HEK293 (cell line): ENCODE measurements at regions of chr6 and their contacts with region 1.

Region 1: GRCh38 chr6:134438837-134439236 is 120.9 kb upstream of the SGK1 start:
- H3K4me3 ChIP-seq: no peak overlapping the region
- H3K27ac ChIP-seq: no peak overlapping the region
- H3K4me1 ChIP-seq: peaks cover 3% of the 10 kb centered on the region; the same call in 1 of the 2 replicates
- CTCF ChIP-seq: no peak

Region 2: GRCh38 chr6:134502614-134503549 is 64.0 kb after region 1 on chr6:
- CTCF ChIA-PET with region 1: no interaction called
- POLR2A ChIA-PET with region 1: no interaction called
- H3K4me3 ChIP-seq: no peak overlapping the region
- H3K27ac ChIP-seq: no peak overlapping the region
- H3K4me1 ChIP-seq: no peaks in the 10 kb centered on the region
- CTCF ChIP-seq: no peak

Region 3: GRCh38 chr6:134537146-134537555 is 98.3 kb after region 1 on chr6:
- CTCF ChIA-PET with region 1: no interaction called
- POLR2A ChIA-PET with region 1: interaction called, 11 read pairs
- H3K4me3 ChIP-seq: no peak overlapping the region
- H3K27ac ChIP-seq: no peak overlapping the region
- H3K4me1 ChIP-seq: no peaks in the 10 kb centered on the region
- CTCF ChIP-seq: no peak